Activated CD4-positive, alpha-beta T cell treated with anti-CD3 and anti-CD28 coated beads, Interleukin-2, amount 10 ng/mL, durations not matched to agents 7 days and 5 days (primary cell): ENCODE measurements at regions of chr11 and their contacts with region 1.

Region 1: DNA sequence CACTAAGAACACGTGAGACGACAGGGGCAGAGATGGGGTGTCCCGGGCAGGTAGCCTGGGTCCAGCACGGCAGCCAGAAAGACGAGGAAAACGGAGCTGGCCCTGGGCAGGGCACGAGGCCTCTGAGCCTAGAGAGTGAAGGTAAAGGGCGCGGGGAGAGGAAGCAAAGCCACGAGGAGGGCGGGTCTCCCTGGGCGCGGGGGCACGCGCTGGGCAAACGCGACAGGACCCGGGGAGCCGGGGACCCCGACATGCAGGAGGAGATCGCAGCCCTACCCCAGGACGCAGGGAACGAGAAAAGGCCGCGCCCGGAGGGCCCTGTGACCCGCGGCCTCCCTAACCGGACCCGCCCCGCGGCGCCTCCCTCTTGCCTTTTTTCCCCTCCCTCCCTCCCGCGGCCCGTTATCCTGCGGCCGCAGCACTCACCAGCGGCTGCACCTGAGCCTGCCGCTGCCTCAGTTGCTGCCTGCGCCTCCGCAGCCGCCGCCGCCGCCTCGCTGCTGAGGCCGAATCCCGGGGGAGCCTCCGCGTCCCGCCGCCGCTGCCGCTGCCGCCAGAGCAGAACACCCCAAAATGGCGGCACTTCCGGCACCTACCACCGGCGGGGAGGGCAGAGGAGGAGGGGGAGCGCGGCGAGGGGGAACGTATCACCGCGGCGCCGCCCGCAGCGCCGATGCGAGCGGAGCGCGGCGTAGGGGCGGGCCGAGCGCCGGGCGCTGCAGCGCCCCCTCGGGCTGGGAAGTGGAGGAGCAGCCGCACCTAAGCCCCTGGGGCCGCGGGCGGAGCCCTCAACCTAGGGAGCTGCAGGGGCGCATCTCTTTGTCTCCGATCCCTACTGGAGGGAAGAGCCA is at the start of gene CELF1:
- DNase-seq: peak; percentile 94
- H3K4me3 Mint-ChIP-seq: peak within 1 kb of the TSS; percentile 97
- H3K27ac Mint-ChIP-seq: peak within 1 kb of the TSS; percentile 93
- H3K4me1 Mint-ChIP-seq: peaks cover 43% of the 10 kb centered on the region
- H3K27me3 Mint-ChIP-seq: no peaks in the 10 kb centered on the region
- total RNA-seq, gene CELF1: 102 to 105 TPM

Region 2: DNA sequence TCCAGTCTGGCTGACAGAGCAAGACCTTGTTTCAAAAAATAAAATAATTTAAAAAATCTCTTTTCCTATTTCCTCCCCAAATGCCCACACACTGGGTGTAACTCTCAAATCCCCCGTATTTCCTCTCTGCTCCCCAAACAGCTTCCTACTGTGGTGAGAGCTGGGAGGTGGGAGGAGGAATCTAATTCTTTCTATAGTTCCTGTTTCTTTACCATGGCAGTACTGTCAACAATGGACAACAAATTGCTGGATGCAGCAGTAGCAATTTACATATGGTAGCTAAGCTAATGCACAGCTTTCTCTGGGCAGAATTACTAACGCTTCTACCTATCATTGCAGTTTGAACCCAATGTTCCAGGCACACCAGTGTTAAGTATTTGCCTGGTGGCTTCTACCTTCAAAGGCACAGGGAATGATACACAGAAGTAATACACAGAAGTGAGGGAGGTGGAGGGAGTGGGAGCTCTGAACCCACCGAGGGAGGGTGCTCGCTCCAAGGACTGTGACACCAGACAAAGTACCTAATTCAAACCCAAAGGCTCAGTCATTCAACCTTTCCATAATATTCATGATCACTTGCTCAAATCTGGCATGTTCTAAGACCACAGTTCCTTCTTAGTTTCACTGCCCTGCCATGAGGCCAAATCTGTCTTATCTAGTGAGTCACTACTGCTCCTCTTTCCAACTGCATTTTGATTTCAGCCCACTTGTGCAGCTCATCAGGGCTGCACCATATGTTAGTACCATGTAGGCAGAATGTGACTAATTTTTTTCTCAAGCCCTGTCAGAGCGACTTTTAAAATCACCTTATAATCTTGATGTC is 37.8 kb before region 1 on chr11:
- CTCF ChIA-PET with region 1: interaction called, 11 read pairs
- POLR2A ChIA-PET with region 1: no interaction called
- DNase-seq: no peak
- H3K4me3 Mint-ChIP-seq: no peak overlapping the region
- H3K27ac Mint-ChIP-seq: peak overlapping the region; percentile 51
- H3K4me1 Mint-ChIP-seq: peaks cover 72% of the 10 kb centered on the region
- H3K27me3 Mint-ChIP-seq: no peaks in the 10 kb centered on the region

Region 3: GRCh38 chr11:47532597-47533213 is 20.1 kb before region 1 on chr11:
- CTCF ChIA-PET with region 1: interaction called, 35 read pairs
- POLR2A ChIA-PET with region 1: interaction called, 6 read pairs
- DNase-seq: no peak
- H3K4me3 Mint-ChIP-seq: no peak overlapping the region
- H3K27ac Mint-ChIP-seq: no peak overlapping the region
- H3K4me1 Mint-ChIP-seq: peaks cover 15% of the 10 kb centered on the region
- H3K27me3 Mint-ChIP-seq: no peaks in the 10 kb centered on the region

Region 4: DNA sequence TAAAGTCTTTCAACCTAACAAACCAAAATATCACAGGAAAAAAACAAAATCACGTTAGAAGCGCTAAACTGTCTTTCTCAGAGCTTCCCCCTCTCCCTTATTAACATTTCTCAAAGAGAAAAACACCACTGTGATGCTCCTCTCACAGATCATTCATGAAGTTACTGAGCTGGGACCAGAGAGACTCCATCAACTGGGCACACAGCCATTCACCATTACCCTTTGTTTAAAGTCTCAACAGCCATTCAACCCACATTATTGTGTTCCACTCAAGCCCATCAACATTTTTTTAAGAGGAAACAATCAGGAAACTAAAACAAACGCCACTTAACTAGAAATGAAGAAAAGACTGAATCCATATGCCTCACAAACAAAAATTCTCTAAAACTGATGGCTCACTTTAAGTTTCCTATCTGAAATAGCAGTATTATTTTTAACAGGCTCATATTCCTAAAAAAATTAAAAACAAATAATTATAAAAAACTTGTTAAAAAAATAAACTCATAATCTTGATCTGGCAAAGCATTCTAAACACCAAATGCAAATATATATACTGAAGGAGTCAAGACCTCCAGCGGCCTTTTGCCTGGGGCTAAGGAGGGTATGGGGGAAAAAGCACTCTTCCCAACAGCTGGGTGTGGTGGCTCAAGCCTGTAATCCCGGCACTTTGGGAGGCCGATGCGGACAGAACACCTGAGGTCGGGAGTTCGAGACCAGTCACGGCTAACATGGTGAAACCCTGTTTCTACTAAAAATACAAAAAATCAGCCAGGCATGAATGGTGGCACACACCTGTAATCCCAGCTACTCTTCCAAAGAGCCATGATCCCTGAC is 13.8 kb before region 1 on chr11:
- CTCF ChIA-PET with region 1: interaction called, 35 read pairs
- POLR2A ChIA-PET with region 1: interaction called, 3 read pairs
- DNase-seq: no peak
- H3K4me3 Mint-ChIP-seq: no peak overlapping the region
- H3K27ac Mint-ChIP-seq: peak overlapping the region; percentile 69
- H3K4me1 Mint-ChIP-seq: peaks cover 39% of the 10 kb centered on the region
- H3K27me3 Mint-ChIP-seq: no peaks in the 10 kb centered on the region

Region 5: DNA sequence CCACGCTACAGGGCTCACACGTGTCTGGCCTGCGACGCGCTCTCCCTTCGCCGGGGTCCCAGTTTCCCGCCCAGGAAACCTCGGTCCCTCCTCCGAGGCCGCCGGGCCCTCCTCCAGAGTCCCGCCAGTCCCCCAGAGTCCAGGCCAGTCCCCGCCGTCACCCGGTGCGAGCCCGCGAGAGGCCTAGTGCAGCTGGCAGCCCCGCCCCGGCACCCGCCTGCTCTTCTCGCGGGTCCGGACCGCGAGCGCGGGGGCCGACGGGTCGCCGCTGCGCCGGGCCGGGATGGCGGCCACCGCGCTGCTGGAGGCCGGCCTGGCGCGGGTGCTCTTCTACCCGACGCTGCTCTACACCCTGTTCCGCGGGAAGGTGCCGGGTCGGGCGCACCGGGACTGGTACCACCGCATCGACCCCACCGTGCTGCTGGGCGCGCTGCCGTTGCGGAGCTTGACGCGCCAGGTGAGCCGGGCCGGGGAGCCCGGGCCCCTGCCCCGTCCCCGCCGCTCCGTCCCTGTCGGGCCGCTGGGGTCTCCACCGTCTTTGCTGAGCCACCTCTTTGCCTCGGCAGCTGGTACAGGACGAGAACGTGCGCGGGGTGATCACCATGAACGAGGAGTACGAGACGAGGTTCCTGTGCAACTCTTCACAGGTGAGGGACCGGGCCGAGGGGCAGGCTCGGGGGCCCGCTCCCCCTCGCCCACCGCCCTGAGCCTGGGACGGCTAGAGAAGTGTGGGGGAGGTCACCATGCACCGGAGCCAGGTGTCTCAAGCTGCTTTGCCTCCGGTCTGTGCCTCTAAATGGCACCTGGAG is 12.8 kb after region 1 on chr11 and contains the start of gene PTPMT1:
- CTCF ChIA-PET with region 1: interaction called, 14 read pairs
- POLR2A ChIA-PET with region 1: no interaction called
- DNase-seq: peak; percentile 70
- H3K4me3 Mint-ChIP-seq: peak within 1 kb of the TSS; percentile 81
- H3K27ac Mint-ChIP-seq: peak within 1 kb of the TSS; percentile 89
- H3K4me1 Mint-ChIP-seq: peaks cover 30% of the 10 kb centered on the region
- H3K27me3 Mint-ChIP-seq: no peaks in the 10 kb centered on the region
- total RNA-seq, gene PTPMT1: 34.2 to 40.5 TPM

Region 6: DNA sequence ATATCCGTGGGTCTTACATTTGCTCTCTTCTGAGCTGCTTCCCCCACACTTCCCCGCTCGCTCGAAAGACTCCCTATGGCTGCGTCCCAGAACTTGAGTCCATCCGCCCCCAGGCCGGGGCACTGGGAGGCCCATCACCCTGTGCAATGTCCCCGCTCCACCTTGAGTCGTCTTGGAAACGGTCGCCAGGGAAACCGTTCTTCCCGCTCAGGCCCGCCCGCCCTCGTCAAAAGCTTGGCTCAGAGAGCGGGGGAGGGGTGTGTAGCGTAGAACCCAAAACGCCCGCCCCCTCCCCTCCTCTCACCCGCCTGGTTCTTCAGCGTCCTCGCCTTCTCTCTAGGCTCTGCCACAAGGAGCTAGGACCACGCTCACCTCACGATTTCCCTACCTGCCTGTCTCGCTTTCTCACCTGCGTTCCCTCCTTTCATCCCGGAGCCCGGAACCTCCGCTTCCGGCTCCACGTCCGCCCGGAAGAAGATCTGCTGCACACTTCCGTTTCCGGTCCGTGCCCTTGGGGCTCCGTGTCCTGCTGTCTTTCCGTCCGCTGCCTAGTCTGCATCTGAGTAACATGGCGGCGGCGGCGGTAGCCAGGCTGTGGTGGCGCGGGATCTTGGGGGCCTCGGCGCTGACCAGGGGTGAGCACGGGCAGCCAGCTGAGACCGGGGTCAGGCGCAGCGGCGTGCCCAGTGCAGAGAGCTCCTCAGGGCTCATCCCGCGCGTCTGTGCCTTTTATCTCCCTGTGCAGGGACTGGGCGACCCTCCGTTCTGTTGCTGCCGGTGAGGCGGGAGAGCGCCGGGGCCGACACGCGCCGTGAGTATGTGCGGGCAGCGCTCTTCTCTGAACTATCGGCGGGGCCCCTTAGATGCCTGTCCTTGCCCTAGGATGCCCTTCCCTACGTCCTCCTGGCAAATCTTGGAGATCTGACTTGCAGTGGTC is 26.0 kb after region 1 on chr11 and contains the starts of genes KBTBD4 and NDUFS3:
- CTCF ChIA-PET with region 1: interaction called, 18 read pairs
- POLR2A ChIA-PET with region 1: no interaction called
- DNase-seq: peak; percentile 90
- H3K4me3 Mint-ChIP-seq: peak within 1 kb of the TSS; percentile 94
- H3K27ac Mint-ChIP-seq: peak within 1 kb of the TSS; percentile 99
- H3K4me1 Mint-ChIP-seq: peaks cover 37% of the 10 kb centered on the region
- H3K27me3 Mint-ChIP-seq: no peaks in the 10 kb centered on the region
- total RNA-seq, gene KBTBD4: 17.2 to 20.3 TPM
- total RNA-seq, gene NDUFS3: 105 to 110 TPM